ENCODE measurements at regions of chr9 and their contacts with region 1.

Region 1: DNA sequence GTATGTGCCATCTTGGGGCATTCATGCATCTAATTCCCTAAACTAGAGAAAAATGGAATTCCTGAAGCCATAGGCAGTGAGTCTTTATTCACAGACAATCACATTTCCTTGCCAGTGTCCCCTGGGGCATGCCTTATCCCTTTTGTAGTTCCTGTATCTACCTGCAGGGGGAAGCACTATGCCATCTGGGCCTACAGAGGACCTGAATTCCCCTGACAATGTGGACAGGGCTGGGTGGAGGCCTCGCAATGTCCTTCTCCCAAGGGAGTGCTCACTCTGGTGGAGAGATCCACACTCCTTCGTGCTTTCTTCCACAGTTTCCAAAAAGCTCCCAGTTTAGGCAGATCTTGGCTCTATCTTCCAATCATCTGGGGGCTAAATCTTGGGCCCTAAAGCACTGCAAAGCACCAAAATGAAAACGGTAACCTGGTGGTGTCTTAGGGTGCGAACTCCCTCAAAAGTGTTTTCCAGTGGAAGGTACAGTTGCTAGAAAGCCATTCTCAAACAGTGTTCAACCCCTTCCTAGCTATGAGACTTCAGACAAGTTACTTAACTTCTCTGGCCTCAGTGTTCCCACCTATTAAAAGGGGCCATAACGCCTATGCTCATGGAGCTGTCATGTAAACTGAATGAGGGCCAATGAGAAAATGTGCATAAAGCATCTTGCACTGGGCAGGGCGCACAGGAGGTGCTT is 17.5 kb downstream of the WHRN start:
- DNase-seq: peak; percentile 73
- H3K4me3 ChIP-seq: no peak overlapping the region
- H3K27ac ChIP-seq: no peak overlapping the region
- H3K4me1 ChIP-seq: peaks cover 0 to 3% (median 0%) of the 10 kb centered on the region in 4 donors
- H3K27me3 ChIP-seq: no peaks in the 10 kb centered on the region
- CTCF ChIP-seq: peak; percentile 85 to 93 (median 90)
- EP300 ChIP-seq: no peak
- POLR2A ChIP-seq: no peak

Region 2: DNA sequence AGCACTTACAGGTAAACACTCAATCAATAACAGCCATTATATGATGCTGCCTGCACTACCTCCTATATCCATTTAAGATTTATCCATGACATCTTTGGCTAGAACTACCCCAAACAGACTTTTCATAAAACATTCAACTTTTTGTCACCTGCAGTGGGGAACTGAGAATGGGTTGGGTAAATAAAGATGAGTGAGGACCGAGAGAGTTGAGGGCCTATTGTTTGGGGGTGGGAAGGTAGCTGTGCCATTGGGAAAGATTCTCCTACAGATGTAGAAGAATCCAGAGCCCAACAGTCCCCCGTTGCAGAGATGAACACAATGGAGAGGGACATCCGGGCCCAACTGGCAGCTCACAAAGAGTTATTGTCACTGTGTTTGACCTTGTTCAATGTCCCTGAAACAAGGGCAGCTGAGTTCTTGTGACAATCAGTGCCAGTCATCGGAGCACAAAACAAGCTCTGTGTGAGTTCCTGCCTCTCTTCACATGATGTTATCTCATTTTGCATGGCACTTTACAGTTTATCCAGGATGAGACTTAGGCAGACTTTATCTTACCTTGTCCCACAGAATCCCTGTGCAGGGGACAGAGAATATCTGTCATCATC is 1348.4 kb before region 1 on chr9:
- in situ Hi-C with region 1: no loop called
- intact Hi-C with region 1: no loop called
- DNase-seq: no peak
- H3K4me3 ChIP-seq: no peak overlapping the region
- H3K27ac ChIP-seq: no peak overlapping the region
- H3K4me1 ChIP-seq: no peaks in the 10 kb centered on the region
- H3K27me3 ChIP-seq: peaks cover 3% of the 10 kb centered on the region
- CTCF ChIP-seq: no peak
- EP300 ChIP-seq: no peak
- POLR2A ChIP-seq: no peak

Region 3: GRCh38 chr9:114121227-114122135 is 366.3 kb before region 1 on chr9:
- in situ Hi-C with region 1: no loop called
- intact Hi-C with region 1: no loop called
- DNase-seq: no peak
- H3K4me3 ChIP-seq: no peak overlapping the region
- H3K27ac ChIP-seq: no peak overlapping the region
- H3K4me1 ChIP-seq: peaks cover 0 to 5% (median 0%) of the 10 kb centered on the region in 4 donors
- H3K27me3 ChIP-seq: peaks cover 5% of the 10 kb centered on the region
- CTCF ChIP-seq: no peak
- EP300 ChIP-seq: no peak
- POLR2A ChIP-seq: no peak

Region 4: GRCh38 chr9:114405294-114406034 is 82.3 kb before region 1 on chr9:
- in situ Hi-C with region 1: no loop called
- intact Hi-C with region 1: loop called (anchors 10 kb)
- DNase-seq: peak; percentile 85
- H3K4me3 ChIP-seq: no peak overlapping the region
- H3K27ac ChIP-seq: no peak overlapping the region
- H3K4me1 ChIP-seq: peaks cover 0 to 12% (median 5%) of the 10 kb centered on the region in 4 donors
- H3K27me3 ChIP-seq: no peaks in the 10 kb centered on the region
- CTCF ChIP-seq: peak; percentile 76 to 87 (median 83)
- EP300 ChIP-seq: no peak
- POLR2A ChIP-seq: no peak

Region 5: DNA sequence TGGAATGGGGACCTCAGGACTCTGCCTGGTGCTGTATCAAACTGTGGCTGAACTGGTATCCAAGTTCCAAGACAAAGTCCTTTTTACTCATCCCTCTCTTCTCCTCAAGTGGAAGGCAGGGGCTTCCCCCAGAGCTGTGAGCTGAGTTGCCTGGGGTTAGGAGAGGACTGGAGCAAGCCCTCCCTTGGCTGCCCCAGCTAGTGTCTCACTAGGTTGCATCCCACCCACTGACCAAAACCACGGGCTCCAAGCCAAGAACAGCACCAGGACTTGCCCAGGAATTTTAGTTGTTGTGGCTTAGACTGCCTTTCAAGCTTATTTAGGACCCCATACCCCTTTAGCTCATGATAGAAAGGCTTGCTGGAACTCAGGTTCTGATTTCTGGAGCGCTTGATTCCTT is 788.9 kb after region 1 on chr9:
- in situ Hi-C with region 1: no loop called
- intact Hi-C with region 1: no loop called
- DNase-seq: no peak
- H3K4me3 ChIP-seq: no peak overlapping the region
- H3K27ac ChIP-seq: no peak overlapping the region
- H3K4me1 ChIP-seq: no peaks in the 10 kb centered on the region
- H3K27me3 ChIP-seq: no peaks in the 10 kb centered on the region
- CTCF ChIP-seq: no peak
- EP300 ChIP-seq: no peak
- POLR2A ChIP-seq: no peak